Aorta (tissue), 5 donors: ENCODE measurements at regions of chr11 and their contacts with region 1.

Region 1: DNA sequence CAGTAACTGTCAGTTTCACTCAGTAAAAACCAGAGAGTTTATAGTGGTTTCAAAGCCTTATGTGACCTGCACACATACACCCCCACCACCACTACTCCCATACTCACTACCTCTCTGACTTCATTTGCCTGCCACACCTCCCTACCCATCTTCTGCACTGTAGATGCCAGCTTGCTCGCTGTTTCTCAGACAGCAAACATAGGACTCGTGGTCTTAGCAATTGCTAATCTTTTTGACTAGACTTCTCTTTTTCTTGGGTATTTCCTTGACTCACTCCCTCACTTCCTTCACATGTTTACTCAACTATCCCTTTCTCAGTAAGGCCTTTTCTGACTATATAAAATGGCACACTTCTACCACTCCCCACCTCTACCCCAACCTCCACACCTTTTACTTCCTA is 27.8 kb downstream of the CEP295 start:
- DNase-seq: no peak
- ATAC-seq: no peak
- H3K4me3 ChIP-seq: no peak overlapping the region
- H3K27ac ChIP-seq: no peak overlapping the region
- H3K4me1 ChIP-seq: peaks cover 0 to 2% of the 10 kb centered on the region in 2 donors
- H3K27me3 ChIP-seq: no peaks in the 10 kb centered on the region

Region 2: DNA sequence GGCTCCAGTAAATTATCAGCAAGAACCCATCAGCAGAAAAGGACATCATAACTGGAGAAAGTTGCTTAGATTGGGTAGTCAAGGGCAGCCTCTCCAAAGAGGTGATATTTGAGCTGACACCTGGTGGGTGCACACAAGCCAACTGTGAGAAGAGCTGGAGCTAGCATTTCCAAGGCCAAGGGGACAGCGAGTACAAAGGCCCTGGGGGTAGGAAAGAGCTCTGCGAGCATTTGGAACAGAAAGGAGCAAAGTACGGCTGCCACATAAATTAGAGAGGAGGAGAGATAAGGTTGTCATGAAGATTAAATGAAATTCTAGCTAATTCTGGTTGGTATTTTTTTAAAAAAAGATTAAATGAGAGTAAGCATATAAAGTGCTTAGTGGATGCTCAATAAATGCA is 124.3 kb before region 1 on chr11:
- intact Hi-C with region 1: no loop called
- DNase-seq: no peak
- ATAC-seq: no peak
- H3K4me3 ChIP-seq: no peak overlapping the region
- H3K27ac ChIP-seq: no peak overlapping the region
- H3K4me1 ChIP-seq: no peaks in the 10 kb centered on the region
- H3K27me3 ChIP-seq: no peaks in the 10 kb centered on the region

Region 3: DNA sequence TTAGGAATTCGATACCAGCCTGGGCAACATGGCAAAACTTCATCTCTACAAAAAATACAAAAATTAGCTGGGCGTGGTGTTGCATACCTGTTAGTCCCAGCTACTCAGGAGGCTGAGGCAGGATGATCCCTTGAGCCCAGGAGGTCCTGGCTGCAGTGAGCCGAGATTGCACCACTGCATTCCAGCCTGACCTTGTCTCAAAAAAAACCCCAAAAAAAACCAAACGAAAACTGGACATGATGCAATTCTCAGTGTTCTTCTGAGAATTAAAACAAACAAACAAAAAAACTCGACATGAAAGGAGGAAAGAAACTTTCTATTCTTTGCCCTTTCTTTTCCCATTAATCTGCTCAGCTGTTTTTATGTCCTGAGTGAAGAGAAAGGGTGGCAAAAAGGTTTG is 102.3 kb after region 1 on chr11:
- intact Hi-C with region 1: loop called in 1 of 2 experiments (anchors 10 kb)
- DNase-seq: no peak
- ATAC-seq: no peak
- H3K4me3 ChIP-seq: no peak overlapping the region
- H3K27ac ChIP-seq: no peak overlapping the region
- H3K4me1 ChIP-seq: no peaks in the 10 kb centered on the region
- H3K27me3 ChIP-seq: no peaks in the 10 kb centered on the region

Region 4: DNA sequence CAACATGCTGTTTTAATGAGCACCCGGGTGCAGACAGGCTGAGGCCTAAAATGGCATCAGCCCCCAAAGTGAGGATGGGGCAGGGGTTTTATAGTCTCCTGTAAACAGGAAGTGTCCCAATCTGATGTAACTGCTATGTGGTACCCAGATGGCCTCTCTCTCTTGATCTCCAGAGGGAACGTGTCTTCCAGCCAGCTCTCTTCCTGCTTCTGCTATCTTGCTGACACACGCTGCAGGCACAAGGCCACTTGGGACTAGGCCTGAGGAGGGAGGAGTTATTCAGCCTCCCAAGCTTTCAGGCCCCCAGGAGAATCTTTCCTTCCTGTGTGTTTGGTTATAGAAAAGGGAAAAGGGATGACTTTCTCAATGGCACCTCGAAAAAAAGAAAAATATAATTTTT is 172.6 kb after region 1 on chr11:
- intact Hi-C with region 1: no loop called
- DNase-seq: no peak
- ATAC-seq: no peak
- H3K4me3 ChIP-seq: no peak overlapping the region
- H3K27ac ChIP-seq: no peak overlapping the region
- H3K4me1 ChIP-seq: peaks cover 0 to 6% of the 10 kb centered on the region in 2 donors
- H3K27me3 ChIP-seq: no peaks in the 10 kb centered on the region